CD4-positive, alpha-beta T cell (primary cell): ENCODE measurements at regions of chr3 and their contacts with region 1.

Region 1: DNA sequence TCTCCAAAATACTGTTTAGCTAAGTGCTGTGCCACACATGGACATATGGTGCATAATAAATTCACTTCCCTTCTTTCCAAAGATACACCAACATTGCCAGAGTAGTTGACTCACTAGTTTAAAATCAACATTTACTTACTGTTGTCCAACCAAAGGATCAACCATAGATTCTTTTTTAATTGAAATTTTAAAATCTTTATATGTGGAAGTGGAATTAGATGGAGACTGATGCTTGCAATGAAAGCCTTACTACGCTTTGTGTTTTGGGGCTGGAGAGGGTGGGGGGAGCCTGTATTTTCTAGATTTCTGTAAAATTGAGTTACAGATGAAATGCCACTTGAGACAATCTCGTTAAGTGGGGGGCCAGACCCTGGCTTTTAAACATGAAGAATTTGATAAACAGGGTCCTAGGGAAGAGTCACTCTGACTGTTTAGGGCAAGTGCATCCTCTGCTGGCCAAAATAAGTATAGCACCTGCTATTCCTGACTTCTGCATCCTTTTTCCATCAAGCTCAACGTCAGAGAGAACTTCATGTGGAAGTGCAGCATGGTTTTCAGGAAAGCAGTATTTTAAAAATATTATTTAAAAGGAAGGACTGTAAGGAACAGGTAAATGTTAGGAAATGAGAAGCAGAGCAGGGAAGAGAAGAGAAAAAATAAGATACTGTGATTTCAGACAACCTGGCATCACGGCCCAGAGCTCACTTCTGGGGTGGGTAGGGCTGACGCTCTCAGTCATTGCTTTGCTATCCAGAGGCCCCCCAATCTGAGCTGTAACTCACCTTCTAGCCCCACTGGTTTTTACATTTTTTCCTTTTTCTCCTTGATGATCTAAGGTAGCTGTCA is 76.7 kb downstream of the BOC start:
- DNase-seq: peak in 12 of 14 experiments; percentile 12 to 72 (median 38)
- ATAC-seq: peak; percentile 61
- H3K4me3 ChIP-seq: no peak overlapping the region
- H3K4me3 Mint-ChIP-seq: no peak overlapping the region
- H3K27ac ChIP-seq: no peak overlapping the region
- H3K27ac Mint-ChIP-seq: no peak overlapping the region
- H3K4me1 ChIP-seq: no peaks in the 10 kb centered on the region
- H3K4me1 Mint-ChIP-seq: no peaks in the 10 kb centered on the region
- H3K27me3 ChIP-seq: no peaks in the 10 kb centered on the region
- H3K27me3 Mint-ChIP-seq: no peaks in the 10 kb centered on the region
- CTCF ChIP-seq: peak; percentile 99

Region 2: GRCh38 chr3:112582244-112582874 is 705.7 kb before region 1 on chr3:
- CTCF ChIA-PET with region 1: no interaction called
- POLR2A ChIA-PET with region 1: no interaction called
- intact Hi-C with region 1: loop called in 1 of 2 experiments (anchors 2 kb)
- DNase-seq: peak in 6 of 14 experiments; percentile 2 to 60 (median 30)
- ATAC-seq: no peak
- H3K4me3 ChIP-seq: no peak overlapping the region
- H3K4me3 Mint-ChIP-seq: no peak overlapping the region
- H3K27ac ChIP-seq: no peak overlapping the region
- H3K27ac Mint-ChIP-seq: peak overlapping the region; percentile 36
- H3K4me1 ChIP-seq: no peaks in the 10 kb centered on the region
- H3K4me1 Mint-ChIP-seq: peaks cover 5% of the 10 kb centered on the region
- H3K27me3 ChIP-seq: no peaks in the 10 kb centered on the region
- H3K27me3 Mint-ChIP-seq: no peaks in the 10 kb centered on the region
- CTCF ChIP-seq: peak; percentile 43

Region 3: DNA sequence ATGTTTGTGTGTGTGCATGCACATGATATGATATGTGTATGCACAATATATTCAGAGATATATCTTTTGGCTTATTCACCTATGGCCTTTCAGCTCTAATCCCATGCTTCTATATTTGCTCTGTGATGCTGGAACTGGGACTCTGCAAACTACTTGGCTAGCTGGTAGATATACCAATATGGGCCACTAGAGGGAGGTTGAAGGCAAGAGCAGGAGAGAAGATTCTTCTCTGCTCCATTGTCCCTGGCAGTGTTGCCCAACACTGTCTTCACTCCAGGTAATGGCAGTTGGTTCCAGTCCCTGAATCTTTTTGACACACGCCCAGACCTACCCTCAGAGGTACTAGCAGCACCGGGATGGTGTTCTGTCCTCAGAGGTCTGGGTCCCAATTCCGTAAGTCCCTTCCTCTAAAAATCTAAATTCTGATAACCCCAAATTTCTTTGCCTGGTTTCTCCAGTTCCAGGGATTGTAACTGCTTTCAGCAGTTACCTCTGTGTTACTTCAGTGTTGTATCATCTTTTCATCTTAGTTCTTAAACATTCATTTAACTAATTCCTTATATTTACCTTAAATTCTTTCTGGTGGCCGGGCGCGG is 252.5 kb before region 1 on chr3:
- CTCF ChIA-PET with region 1: interaction called, 4 read pairs
- POLR2A ChIA-PET with region 1: no interaction called
- intact Hi-C with region 1: loop called in 1 of 2 experiments (anchors 5 kb)
- DNase-seq: peak in 10 of 14 experiments; percentile 3 to 76 (median 8)
- ATAC-seq: peak; percentile 84
- H3K4me3 ChIP-seq: no peak overlapping the region
- H3K4me3 Mint-ChIP-seq: no peak overlapping the region
- H3K27ac ChIP-seq: no peak overlapping the region
- H3K27ac Mint-ChIP-seq: no peak overlapping the region
- H3K4me1 ChIP-seq: no peaks in the 10 kb centered on the region
- H3K4me1 Mint-ChIP-seq: peaks cover 5% of the 10 kb centered on the region
- H3K27me3 ChIP-seq: no peaks in the 10 kb centered on the region
- H3K27me3 Mint-ChIP-seq: no peaks in the 10 kb centered on the region
- CTCF ChIP-seq: peak; percentile 88

Region 4: GRCh38 chr3:113051302-113051711 is 236.7 kb before region 1 on chr3:
- CTCF ChIA-PET with region 1: no interaction called
- POLR2A ChIA-PET with region 1: interaction called, 6 read pairs
- intact Hi-C with region 1: loop called (anchors 1 kb)
- DNase-seq: peak; percentile 75 to 92 (median 86)
- ATAC-seq: peak; percentile 91
- H3K4me3 ChIP-seq: no peak overlapping the region
- H3K4me3 Mint-ChIP-seq: no peak overlapping the region
- H3K27ac ChIP-seq: no peak overlapping the region
- H3K27ac Mint-ChIP-seq: no peak overlapping the region
- H3K4me1 ChIP-seq: peaks cover 5% of the 10 kb centered on the region
- H3K4me1 Mint-ChIP-seq: peaks cover 19% of the 10 kb centered on the region
- H3K27me3 ChIP-seq: no peaks in the 10 kb centered on the region
- H3K27me3 Mint-ChIP-seq: no peaks in the 10 kb centered on the region
- CTCF ChIP-seq: peak; percentile 82

Region 5: DNA sequence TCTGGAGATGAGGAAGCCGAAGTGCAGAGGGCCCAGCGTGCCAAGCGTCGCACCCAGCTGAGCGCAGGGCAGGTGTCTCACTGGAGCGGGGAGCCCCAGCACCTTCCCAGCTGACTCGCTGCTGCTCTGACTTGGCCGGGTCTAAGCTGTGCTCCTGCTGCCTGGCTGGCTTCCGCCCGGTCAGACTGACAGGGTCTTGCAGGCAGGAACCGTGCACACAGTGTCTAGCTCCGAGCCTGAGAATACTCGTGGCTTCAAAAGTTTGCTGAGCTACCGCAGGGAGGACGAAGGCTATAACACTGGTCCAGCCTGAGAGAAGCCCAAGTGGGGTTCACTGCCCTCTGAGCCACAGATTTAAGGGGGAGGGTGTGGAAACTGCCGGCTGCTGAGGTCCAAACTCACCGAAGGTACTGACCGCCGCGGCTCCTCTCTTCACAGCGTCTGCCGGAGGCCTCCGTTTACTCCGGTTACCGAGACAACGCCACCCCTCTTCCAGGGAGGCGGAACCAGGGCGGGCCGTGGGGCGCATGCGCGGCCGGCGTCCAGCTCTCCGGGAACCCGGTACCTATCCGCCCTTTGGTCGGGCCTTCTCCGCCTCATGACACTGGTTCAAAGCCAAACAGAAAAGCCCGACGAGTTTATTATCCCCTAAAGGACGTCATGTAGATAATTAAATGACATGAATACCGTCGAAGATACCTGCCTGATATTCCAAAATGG is 153.2 kb after region 1 on chr3 and contains the start of gene CFAP44:
- CTCF ChIA-PET with region 1: no interaction called
- POLR2A ChIA-PET with region 1: no interaction called
- intact Hi-C with region 1: no loop called
- DNase-seq: peak; percentile 17 to 74 (median 40)
- ATAC-seq: peak; percentile 69
- H3K4me3 ChIP-seq: peak within 1 kb of the TSS; percentile 35
- H3K4me3 Mint-ChIP-seq: peak within 1 kb of the TSS; percentile 34
- H3K27ac ChIP-seq: no peak within 1 kb of the TSS
- H3K27ac Mint-ChIP-seq: no peak within 1 kb of the TSS
- H3K4me1 ChIP-seq: no peaks in the 10 kb centered on the region
- H3K4me1 Mint-ChIP-seq: peaks cover 5% of the 10 kb centered on the region
- H3K27me3 ChIP-seq: no peaks in the 10 kb centered on the region
- H3K27me3 Mint-ChIP-seq: no peaks in the 10 kb centered on the region
- CTCF ChIP-seq: no peak
- total RNA-seq, gene CFAP44: 9.7 to 10.0 TPM